ENCODE measurements at regions of chr2 and their contacts with region 1.

Region 1: GRCh38 chr2:231394211-231395141 is 1.0 kb upstream of the B3GNT7 start:
- DNase-seq: no peak
- ATAC-seq: no peak

Region 2: DNA sequence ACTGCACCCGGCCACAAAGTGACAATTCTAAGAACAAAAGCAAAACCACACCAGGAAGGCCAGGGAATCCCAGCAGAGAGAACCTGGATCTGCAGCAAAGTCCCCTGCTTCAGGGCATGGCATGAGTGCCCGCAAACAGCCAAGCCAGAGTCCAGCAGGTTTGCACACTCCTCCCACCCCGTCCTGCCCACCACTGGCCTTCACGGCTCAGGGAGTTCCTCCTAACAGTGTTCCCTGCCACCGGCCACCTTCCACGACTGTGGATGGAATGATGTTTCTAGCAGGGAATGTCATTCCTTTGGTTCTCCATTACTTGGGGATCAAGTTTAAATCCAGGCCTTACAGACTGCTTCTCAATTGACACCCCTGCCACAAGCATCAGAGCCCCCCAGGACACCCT is 41.0 kb before region 1 on chr2:
- intact Hi-C with region 1: no loop called
- DNase-seq: peak; percentile 25
- ATAC-seq: no peak

Region 3: DNA sequence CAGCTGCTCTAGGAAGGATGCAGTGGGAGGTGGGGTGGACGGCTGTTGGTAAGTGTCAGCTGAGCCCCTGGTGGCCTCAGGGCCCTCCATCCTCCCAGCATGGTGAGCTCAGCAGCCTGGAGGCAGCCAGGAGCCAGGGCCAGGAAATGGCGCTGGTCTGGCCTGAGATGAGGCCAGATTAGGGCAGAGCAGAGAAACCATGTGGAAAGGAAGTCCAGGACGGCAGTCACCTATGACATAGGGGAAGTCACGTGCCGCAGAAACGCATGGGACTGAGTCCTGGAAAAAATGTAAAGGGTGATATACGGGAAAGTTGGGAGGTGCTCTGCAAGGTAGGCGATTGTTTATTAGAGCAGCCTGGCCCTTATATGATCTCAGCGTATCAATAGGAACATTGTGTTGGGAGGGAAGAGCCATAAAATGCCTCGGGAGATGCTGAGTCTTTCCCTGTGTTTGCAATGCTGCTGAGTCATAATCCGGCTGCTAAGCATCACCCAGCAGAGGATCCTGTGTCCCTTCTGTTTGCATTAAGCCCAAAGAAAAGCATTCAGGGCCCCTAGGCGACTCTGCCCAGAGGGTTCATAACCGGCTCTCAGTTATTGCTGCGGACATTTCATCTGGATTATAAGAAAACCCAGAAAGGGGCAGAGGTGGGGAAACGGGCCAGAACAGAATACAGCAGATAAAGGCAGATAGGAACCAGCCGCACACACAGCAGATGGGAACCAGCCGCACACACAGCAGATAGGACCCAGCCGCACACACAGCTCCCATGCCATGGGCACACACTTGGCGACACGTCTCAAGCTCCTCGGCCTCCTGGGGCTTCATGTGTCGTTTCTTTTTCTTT is 29.3 kb before region 1 on chr2:
- intact Hi-C with region 1: loop called (anchors 5 kb)
- DNase-seq: peak; percentile 6
- ATAC-seq: no peak